H1 (cell line): ENCODE measurements at regions of chr7 and their contacts with region 1.

Region 1: DNA sequence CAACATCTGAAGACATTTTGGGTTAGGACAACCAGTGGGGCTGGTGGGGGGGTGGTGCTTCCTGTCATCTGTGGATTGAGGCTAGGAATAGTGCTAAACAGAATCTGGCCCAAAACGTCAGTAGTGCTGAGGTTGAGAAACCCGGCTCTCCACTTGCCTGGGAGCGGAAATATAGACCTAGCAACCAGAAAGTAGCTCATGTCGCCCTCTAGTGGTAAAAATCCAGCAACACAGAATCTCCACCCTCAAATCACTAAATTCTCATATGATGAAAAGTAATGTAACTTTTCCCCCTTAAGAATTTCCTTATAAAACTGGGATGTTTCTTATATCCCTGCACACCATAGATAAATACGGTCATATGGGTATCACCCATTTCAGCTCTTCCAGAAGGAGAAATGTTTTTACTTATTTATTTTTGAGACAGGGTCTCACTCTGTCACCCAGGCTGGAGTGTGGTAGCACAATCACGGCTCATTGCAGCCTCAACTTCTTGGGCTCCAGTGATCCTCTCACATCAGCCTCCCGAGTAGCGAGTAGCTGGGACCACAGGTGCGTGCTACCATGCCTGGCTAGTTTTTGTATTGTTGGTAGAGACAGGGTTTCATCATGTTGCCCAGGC is 34.4 kb downstream of the ZC3HAV1 start:
- DNase-seq: peak; percentile 13 to 67
- H3K4me3 ChIP-seq: no peak overlapping the region
- H3K27ac ChIP-seq: no peak overlapping the region
- H3K4me1 ChIP-seq: peaks cover 0 to 2% (median 0%) of the 10 kb centered on the region in 4 experiments; a peak in 2 of 7 replicates
- H3K27me3 ChIP-seq: no peaks in the 10 kb centered on the region
- CTCF ChIP-seq: peak in 2 of 3 experiments; percentile 68 to 80; a peak in 3 of 4 replicates
- EP300 ChIP-seq: no peak
- POLR2A ChIP-seq: no peak
- RAD21 ChIP-seq: peak; percentile 77 to 83

Region 2: GRCh38 chr7:138835087-138835486 is 240.1 kb before region 1 on chr7:
- CTCF ChIA-PET with region 1: no interaction called
- POLR2A ChIA-PET with region 1: no interaction called
- DNase-seq: no peak
- H3K4me3 ChIP-seq: no peak overlapping the region
- H3K27ac ChIP-seq: no peak overlapping the region
- H3K4me1 ChIP-seq: no peaks in the 10 kb centered on the region
- H3K27me3 ChIP-seq: no peaks in the 10 kb centered on the region
- CTCF ChIP-seq: peak in 2 of 3 experiments; percentile 6 to 26; a peak in 2 of 4 replicates
- EP300 ChIP-seq: no peak
- POLR2A ChIP-seq: no peak
- RAD21 ChIP-seq: no peak; a peak in 1 of 4 replicates

Region 3: DNA sequence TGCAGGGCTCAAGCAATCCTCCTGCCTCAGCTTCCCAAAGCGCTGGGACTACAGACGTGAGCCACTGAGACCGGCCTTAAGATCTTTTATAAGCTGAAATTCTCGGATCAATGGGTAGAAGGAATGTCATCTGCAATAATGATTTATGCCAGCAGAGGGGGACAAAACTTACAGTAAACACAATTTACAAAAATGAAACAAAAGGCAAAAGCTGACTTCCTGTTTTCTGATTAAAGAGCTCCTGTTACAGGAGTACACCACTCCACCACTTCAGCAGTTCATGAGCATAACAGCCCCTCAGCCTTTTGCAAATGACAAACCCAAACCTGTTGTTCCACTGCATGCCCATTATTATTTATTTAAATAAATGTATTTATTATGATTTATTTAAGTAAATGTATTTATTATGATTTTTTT is 188.6 kb before region 1 on chr7:
- CTCF ChIA-PET with region 1: interaction called, 12 read pairs
- POLR2A ChIA-PET with region 1: no interaction called
- DNase-seq: no peak
- H3K4me3 ChIP-seq: no peak overlapping the region
- H3K27ac ChIP-seq: no peak overlapping the region
- H3K4me1 ChIP-seq: no peaks in the 10 kb centered on the region; a peak in 2 of 7 replicates
- H3K27me3 ChIP-seq: no peaks in the 10 kb centered on the region
- CTCF ChIP-seq: peak in 2 of 3 experiments; percentile 17 to 53; a peak in 2 of 4 replicates
- EP300 ChIP-seq: no peak
- POLR2A ChIP-seq: no peak
- RAD21 ChIP-seq: peak; percentile 35 to 39; a peak in 3 of 4 replicates

Region 4: DNA sequence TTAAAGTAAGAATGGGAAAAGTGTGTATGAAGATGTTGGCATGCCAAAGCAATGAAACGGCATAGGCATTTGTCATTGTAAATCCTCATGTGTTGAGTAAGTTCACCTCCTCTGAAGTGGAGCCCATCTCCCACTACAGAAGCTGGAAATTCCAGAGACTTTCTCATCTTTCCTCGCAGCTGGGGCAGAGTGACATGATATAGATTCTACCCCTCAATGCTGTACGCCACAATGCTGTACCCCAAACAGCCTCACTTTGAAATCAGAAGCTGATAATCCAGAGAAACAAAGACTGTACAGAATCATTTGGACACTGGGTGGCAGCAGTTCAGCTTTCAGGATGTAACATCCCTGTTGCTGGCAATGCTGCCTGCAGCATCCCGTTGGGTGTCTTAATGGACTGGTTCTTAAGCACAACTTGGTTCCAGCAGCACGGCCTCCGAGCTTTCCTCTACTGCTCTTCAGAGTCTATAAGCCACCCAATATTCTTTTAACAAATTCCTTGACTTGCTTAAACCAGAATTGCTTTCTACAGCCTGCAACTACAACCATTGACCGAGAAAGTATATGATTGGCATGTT is 58.1 kb before region 1 on chr7:
- CTCF ChIA-PET with region 1: interaction called, 29 read pairs
- POLR2A ChIA-PET with region 1: no interaction called
- DNase-seq: peak in 1 of 2 experiments; percentile 67
- H3K4me3 ChIP-seq: no peak overlapping the region
- H3K27ac ChIP-seq: no peak overlapping the region
- H3K4me1 ChIP-seq: 0 out of 7 replicates have a peak, but pooled peaks cover 0 to 5% (median 0%) of the 10 kb centered on the region in 4 experiments
- H3K27me3 ChIP-seq: no peaks in the 10 kb centered on the region
- CTCF ChIP-seq: peak; percentile 35 to 75 (median 70)
- EP300 ChIP-seq: no peak
- POLR2A ChIP-seq: no peak
- RAD21 ChIP-seq: peak; percentile 75 to 78

Region 5: DNA sequence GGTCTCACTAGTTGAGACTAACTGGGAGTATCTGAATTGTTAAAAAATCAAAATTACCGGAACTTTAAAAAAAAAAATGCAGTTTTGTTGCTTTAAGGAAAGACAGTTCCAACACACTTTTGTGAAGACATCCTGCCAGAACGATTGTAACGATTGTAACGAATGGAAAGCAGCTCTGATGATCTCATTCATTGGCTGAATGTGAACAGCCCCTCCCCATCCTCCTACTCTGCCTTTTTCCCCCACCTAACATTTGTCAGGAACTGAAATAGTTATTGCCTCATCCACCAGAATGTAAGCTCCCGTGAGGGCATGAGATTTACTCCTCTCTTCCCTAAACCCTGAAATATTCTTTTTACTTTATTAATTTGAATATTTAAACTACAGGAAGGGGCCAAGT is 16.2 kb before region 1 on chr7:
- CTCF ChIA-PET with region 1: interaction called, 18 read pairs
- POLR2A ChIA-PET with region 1: interaction called, 3 read pairs
- DNase-seq: no peak
- H3K4me3 ChIP-seq: no peak overlapping the region
- H3K27ac ChIP-seq: no peak overlapping the region
- H3K4me1 ChIP-seq: no peaks in the 10 kb centered on the region
- H3K27me3 ChIP-seq: no peaks in the 10 kb centered on the region
- CTCF ChIP-seq: no peak
- EP300 ChIP-seq: no peak
- POLR2A ChIP-seq: no peak
- RAD21 ChIP-seq: no peak

Region 6: GRCh38 chr7:139086454-139086853 is 11.3 kb after region 1 on chr7:
- CTCF ChIA-PET with region 1: interaction called, 27 read pairs
- POLR2A ChIA-PET with region 1: no interaction called
- DNase-seq: no peak
- H3K4me3 ChIP-seq: no peak overlapping the region
- H3K27ac ChIP-seq: no peak overlapping the region
- H3K4me1 ChIP-seq: no peaks in the 10 kb centered on the region
- H3K27me3 ChIP-seq: no peaks in the 10 kb centered on the region
- CTCF ChIP-seq: no peak
- EP300 ChIP-seq: no peak
- POLR2A ChIP-seq: no peak
- RAD21 ChIP-seq: no peak

Region 7: DNA sequence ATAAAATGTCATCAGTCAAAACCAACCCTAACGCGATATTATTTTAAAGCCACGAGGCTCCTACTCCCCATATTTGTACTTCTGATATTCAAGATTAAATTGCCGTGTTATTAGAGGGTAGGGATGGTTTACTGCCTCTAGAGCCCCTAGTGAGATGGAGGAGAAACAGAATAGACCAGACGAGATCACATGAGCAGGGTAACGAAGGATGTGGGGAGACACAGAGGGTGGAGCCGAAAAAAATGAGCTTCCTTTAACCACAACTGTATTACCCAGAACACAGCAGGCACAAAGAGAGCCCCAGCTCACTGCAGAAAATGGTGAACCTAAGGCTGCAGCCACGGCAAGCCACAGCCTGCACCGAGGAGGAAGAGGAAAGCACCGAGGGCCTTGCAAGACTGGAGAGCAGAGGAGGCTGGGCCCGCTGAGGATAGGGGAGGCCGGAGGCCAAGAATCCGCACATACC is 20.1 kb after region 1 on chr7:
- CTCF ChIA-PET with region 1: interaction called, 27 read pairs
- POLR2A ChIA-PET with region 1: no interaction called
- DNase-seq: no peak
- H3K4me3 ChIP-seq: no peak overlapping the region
- H3K27ac ChIP-seq: no peak overlapping the region; the same call in 1 of the 2 replicates
- H3K4me1 ChIP-seq: peaks cover 3 to 13% (median 12%) of the 10 kb centered on the region in 4 experiments
- H3K27me3 ChIP-seq: no peaks in the 10 kb centered on the region
- CTCF ChIP-seq: no peak
- EP300 ChIP-seq: no peak
- POLR2A ChIP-seq: no peak
- RAD21 ChIP-seq: no peak